SK-N-SH (cell line): ENCODE measurements at regions of chr17 and their contacts with region 1.

Region 1: GRCh38 chr17:41801374-41802271 is 10.1 kb downstream of the P3H4 start:
- DNase-seq: peak; percentile 89
- H3K4me3 ChIP-seq: peak overlapping the region in 1 of 2 experiments; percentile 43; a peak in 1 of 4 replicates
- H3K27ac ChIP-seq: no peak overlapping the region
- H3K4me1 ChIP-seq: peaks cover 0 to 6% of the 10 kb centered on the region in 2 experiments; a peak in 1 of 4 replicates
- H3K27me3 ChIP-seq: no peaks in the 10 kb centered on the region
- CTCF ChIP-seq: peak; percentile 96
- EP300 ChIP-seq: no peak
- RAD21 ChIP-seq: peak; percentile 90

Region 2: DNA sequence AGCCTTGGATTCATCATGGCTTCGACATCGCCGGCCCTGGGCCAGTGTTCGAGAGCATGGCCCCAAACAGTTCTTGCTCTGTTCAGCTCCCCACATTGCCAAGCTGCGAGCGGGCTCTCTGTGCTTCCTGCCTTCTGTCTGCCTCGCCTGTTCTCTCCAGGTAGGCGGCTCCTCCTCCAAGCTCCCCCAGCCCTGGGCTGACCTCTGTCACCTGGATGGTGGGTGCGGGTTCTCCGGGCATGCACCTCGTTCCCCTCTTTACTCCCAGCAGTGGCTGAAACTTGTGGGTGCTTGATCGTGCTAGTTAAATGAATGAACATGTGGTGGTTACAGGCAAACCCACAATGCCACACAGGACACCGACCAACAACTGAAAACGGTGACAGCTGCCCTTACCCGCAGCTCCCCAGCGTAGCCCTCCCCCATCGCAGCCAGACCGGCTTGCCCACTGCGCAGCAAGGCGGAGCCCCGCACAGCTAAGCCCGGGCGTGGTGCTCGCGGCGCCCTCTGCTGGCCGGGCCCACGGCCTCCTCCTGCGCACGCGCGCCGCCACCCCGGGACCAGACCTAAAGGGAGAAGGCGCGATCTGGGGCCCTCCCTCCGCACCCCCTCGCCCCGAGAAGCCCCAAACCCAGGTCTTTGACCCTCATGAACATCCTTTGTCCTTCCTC is 135.9 kb before region 1 on chr17:
- CTCF ChIA-PET with region 1: no interaction called
- POLR2A ChIA-PET with region 1: no interaction called
- DNase-seq: peak; percentile 96
- H3K4me3 ChIP-seq: peak overlapping the region; percentile 44 to 58
- H3K27ac ChIP-seq: peak overlapping the region; percentile 49 to 77
- H3K4me1 ChIP-seq: peaks cover 4 to 14% of the 10 kb centered on the region in 2 experiments; a peak in 2 of 4 replicates
- H3K27me3 ChIP-seq: no peaks in the 10 kb centered on the region; the same call in 1 of the 2 replicates
- CTCF ChIP-seq: peak; percentile 89
- EP300 ChIP-seq: no peak
- RAD21 ChIP-seq: peak; percentile 29; the same call in 1 of the 2 replicates

Region 3: DNA sequence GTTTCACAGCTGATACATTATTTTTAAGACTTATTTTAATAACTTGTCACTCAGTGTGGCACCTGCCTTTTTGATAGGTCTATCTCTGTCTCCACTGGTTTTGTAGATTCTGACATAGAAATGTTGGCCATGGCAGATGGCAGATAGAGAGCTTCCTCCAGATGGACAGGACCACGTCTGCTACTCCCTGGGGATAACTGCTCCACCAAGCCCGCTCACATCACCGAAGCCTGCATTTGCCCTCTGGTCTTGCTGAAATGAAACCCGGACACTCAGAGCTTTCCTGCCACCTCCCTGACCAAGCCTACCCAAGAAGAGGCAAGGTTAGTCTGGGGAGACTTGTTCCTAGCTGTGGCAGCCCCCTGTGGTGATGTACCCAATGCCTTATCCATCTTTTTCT is 50.8 kb before region 1 on chr17:
- CTCF ChIA-PET with region 1: interaction called, 405 read pairs
- POLR2A ChIA-PET with region 1: no interaction called
- DNase-seq: no peak
- H3K4me3 ChIP-seq: no peak overlapping the region
- H3K27ac ChIP-seq: no peak overlapping the region
- H3K4me1 ChIP-seq: no peaks in the 10 kb centered on the region; a peak in 1 of 4 replicates
- H3K27me3 ChIP-seq: no peaks in the 10 kb centered on the region
- CTCF ChIP-seq: no peak
- EP300 ChIP-seq: no peak
- RAD21 ChIP-seq: no peak

Region 4: DNA sequence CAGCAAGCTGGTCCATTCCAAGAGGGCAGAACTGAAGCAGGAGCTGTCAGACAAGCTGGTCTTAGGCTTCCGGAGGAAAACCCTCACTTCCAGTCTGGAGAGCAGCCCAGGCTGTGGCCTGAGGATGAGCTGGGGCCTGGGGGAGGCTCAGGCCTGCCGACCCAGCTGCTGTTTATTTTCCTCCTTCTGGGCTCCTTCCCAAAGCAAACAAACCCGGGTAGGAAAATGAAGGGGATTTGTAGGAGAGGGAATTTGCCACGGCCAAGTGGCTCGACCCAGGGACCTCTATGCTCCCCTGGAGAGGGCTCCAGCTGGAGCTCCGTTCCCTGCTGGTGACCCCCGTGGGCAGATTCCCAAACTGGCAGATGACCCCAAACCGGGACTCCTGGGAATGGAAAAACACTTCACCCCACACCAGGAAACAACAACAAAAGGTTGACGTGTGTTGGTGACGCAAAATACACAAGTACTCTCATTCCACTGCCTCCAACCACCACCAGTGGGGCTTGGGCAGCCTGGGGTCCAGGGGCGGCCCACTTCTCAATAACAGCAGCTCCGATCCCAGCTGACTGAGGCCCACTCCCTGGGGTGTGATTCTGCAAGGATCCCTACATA is 23.9 kb before region 1 on chr17:
- CTCF ChIA-PET with region 1: interaction called, 18 read pairs
- POLR2A ChIA-PET with region 1: no interaction called
- DNase-seq: peak; percentile 74
- H3K4me3 ChIP-seq: no peak overlapping the region
- H3K27ac ChIP-seq: peak overlapping the region; percentile 69 to 89
- H3K4me1 ChIP-seq: peaks cover 12 to 35% of the 10 kb centered on the region in 2 experiments
- H3K27me3 ChIP-seq: no peaks in the 10 kb centered on the region
- CTCF ChIP-seq: no peak
- EP300 ChIP-seq: peak in 1 of 2 experiments; percentile 71; a peak in 1 of 4 replicates
- RAD21 ChIP-seq: no peak

Region 5: DNA sequence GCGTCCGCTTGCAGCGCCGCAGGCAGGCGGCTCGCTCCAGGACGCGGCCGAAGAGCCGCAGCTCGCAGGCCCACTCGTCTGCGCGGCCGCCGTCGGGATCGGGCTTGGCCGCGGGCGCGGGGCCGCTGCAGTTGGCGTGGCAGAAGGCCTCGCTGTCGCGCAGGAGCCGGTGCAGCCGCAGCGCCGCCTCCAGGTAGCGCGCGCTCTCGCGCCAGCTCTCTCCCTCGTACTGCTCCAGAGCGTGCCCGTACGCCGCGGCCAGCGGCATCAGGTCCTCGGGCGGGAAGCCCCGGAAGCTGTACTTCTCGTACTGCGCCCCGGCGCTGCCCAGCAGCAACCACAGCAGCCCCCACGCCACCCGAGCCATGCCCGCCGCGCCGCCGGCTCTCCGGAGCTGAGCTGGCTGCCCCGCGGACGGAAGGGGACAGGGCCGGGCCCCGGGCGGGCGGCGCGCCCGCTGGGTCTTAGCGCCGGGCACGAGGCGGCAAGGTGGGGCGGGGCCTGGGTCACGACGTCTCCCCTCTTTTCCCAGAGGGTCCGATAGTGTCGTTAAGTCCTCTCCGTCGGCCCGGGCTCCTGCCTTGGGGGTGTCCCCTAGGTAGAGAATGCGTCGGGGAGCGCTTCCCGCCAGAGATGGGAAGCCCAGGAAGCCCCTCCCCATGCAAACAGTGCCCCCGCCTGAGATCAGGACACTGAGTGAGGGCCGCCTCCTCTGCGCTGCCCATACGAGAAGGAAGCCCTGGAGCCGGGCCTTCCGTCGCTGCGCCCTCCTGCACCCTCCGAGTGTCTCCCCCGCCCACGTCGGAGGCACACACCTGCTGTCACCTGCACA is 10.1 kb after region 1 on chr17 and contains the start of gene P3H4:
- CTCF ChIA-PET with region 1: interaction called, 62 read pairs
- POLR2A ChIA-PET with region 1: no interaction called
- DNase-seq: peak; percentile 94
- H3K4me3 ChIP-seq: peak within 1 kb of the TSS; percentile 75 to 93
- H3K27ac ChIP-seq: peak within 1 kb of the TSS; percentile 80 to 87
- H3K4me1 ChIP-seq: peaks cover 15 to 24% of the 10 kb centered on the region in 2 experiments; a peak in 2 of 4 replicates
- H3K27me3 ChIP-seq: no peaks in the 10 kb centered on the region
- CTCF ChIP-seq: peak; percentile 61
- EP300 ChIP-seq: peak in 1 of 2 experiments; percentile 12; a peak in 1 of 4 replicates
- RAD21 ChIP-seq: peak; percentile 44; the same call in 1 of the 2 replicates
- polyA plus RNA-seq, gene P3H4: 55.5 and 88.3 TPM in 2 replicates

Region 6: DNA sequence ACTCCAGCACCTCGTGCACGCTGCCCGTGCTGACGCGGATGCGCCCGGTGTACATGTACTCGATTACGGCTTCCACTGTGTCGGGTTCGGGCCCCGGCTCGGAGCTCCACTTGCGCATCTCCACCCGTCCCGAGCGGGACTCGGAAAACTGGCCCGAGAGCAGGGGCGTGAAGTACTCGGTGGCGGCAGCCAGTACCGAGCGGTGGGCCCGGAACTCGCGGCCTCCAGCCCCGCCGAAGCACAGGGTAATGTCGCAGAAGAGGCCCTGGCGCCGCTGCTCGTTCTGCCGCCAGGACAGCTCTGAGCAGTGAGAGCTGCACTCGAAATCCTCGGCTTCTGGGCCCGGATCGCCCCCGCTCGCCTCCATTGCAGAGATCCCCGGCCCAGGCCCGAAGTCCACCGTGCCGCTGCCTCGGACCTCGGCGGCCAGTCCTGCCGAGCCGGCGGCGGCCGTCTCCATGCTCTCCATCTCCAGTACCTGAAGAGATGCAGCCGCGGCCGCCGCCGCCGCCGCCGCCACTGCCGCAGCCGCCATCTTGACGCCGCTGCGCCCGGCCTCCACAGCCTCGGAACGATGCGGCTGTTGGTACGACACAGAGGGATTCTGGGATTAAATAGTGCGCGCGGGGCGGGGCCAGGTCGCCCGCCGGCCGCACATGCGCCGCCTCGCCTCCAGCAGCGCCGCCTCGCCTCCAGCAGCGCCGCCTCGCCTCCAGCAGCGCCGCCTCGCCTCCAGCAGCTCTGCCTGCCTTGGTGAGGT is 63.4 kb after region 1 on chr17 and contains the start of gene KLHL11:
- CTCF ChIA-PET with region 1: interaction called, 12 read pairs
- POLR2A ChIA-PET with region 1: no interaction called
- DNase-seq: peak; percentile 96
- H3K4me3 ChIP-seq: peak within 1 kb of the TSS; percentile 91 to 95
- H3K27ac ChIP-seq: peak within 1 kb of the TSS; percentile 72 to 88
- H3K4me1 ChIP-seq: peaks cover 5 to 20% of the 10 kb centered on the region in 2 experiments; a peak in 2 of 4 replicates
- H3K27me3 ChIP-seq: no peaks in the 10 kb centered on the region
- CTCF ChIP-seq: no peak
- EP300 ChIP-seq: peak in 1 of 2 experiments; percentile 44; a peak in 1 of 4 replicates
- RAD21 ChIP-seq: no peak; the same call in 1 of the 2 replicates
- polyA plus RNA-seq, gene KLHL11: 2.6 and 3.0 TPM in 2 replicates

Region 7: DNA sequence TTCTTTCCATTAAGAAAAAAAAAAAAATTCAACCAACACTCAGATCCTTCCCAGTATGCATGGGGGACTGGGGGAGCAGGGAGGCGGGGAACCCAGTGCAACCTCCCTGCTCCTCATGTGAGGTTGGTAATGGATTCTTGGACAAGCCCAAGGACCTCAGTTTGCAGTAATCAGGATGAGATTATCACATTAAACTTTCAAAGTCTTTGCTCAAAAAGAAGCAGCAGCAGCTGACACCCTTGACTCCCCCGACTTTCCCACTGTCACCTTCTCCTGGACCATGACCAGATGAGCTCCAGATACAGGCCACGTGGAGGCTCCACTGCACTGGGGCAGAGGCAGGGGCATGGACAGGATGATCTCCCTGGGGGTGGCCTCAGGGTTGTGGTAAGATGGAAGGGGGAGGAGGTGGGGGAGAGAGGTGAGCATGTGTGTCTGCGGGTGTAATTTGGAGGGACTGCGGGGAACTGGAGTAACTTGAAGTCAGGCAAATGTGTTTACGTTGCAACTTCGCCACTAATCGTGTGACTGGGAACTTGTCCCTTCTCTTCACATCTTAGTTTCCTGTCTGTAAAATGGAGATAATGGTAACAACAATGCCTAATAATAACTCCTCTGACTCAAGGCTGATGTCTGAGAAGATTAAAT is 276.9 kb after region 1 on chr17:
- CTCF ChIA-PET with region 1: no interaction called
- POLR2A ChIA-PET with region 1: no interaction called
- DNase-seq: no peak
- H3K4me3 ChIP-seq: no peak overlapping the region
- H3K27ac ChIP-seq: no peak overlapping the region
- H3K4me1 ChIP-seq: no peaks in the 10 kb centered on the region
- H3K27me3 ChIP-seq: no peaks in the 10 kb centered on the region
- CTCF ChIP-seq: no peak
- EP300 ChIP-seq: no peak
- RAD21 ChIP-seq: no peak